Panc1 (cell line): ENCODE measurements at regions of chr5 and their contacts with region 1.

Region 1: DNA sequence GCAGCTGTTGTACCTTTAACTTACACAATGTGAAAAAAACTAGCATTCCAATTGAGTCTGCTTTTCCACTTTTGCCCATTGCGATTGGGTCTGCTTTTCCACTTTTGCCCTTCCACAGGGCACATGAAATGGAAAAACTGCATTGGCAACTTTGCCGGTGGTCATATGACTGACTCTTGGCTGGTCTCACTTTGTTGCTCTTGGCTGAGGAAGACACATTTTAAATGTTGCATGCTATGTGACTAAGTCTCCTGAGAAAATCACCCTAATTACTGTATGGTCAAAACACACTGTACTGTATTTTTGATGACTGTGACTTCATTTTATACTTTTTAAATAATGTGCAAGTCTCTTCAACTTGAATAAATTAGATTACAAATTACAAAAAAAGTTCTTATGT is 1.6 kb upstream of the OXCT1 start:
- DNase-seq: no peak
- ATAC-seq: no peak
- H3K4me3 ChIP-seq: no peak overlapping the region
- H3K27ac ChIP-seq: no peak overlapping the region
- H3K4me1 ChIP-seq: peaks cover 4% of the 10 kb centered on the region
- H3K27me3 ChIP-seq: peaks cover 10% of the 10 kb centered on the region
- CTCF ChIP-seq: no peak

Region 2: DNA sequence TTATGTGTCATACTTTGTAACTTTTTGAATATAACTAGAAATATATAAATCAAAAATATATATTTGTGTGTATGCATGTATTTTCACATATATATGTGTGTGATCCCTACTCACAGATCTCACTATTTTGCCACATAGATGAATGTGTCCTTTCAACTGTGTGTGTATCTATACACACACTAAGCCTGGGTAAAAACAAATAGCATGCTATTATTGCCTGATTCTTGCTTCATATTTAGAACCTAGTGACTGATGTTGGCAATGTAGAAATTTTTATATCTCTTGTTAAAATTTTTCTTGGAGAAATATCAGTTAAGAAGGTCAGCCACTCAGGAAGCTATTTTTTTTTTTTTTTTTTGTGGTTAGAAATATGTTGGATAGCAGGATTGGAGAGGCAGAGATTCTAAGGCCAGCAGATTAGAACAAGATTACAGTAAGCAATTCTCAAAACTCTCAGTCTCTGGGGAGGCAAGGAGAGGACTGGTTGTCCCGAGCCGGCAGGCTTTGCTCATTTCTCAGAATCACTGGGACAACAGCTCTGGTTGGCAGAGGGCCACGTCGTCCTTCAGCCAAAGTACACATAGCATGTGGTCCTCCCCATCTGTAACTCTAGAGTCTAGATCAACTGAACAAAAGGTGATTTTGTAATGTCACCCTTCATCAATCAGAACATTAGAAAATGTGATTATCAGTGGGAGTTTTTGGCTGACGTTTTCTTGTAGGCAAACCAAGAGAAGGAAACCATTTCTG is 678.2 kb before region 1 on chr5:
- CTCF ChIA-PET with region 1: no interaction called
- POLR2A ChIA-PET with region 1: no interaction called
- in situ Hi-C with region 1: no loop called
- intact Hi-C with region 1: no loop called
- DNase-seq: no peak
- ATAC-seq: no peak
- H3K4me3 ChIP-seq: no peak overlapping the region
- H3K27ac ChIP-seq: no peak overlapping the region
- H3K4me1 ChIP-seq: no peaks in the 10 kb centered on the region
- H3K27me3 ChIP-seq: no peaks in the 10 kb centered on the region
- CTCF ChIP-seq: no peak

Region 3: GRCh38 chr5:42745426-42745825 is 873.6 kb after region 1 on chr5:
- CTCF ChIA-PET with region 1: no interaction called
- POLR2A ChIA-PET with region 1: interaction called, 10 read pairs
- in situ Hi-C with region 1: no loop called
- intact Hi-C with region 1: no loop called
- DNase-seq: no peak
- ATAC-seq: no peak
- H3K4me3 ChIP-seq: no peak overlapping the region
- H3K27ac ChIP-seq: no peak overlapping the region
- H3K4me1 ChIP-seq: no peaks in the 10 kb centered on the region
- H3K27me3 ChIP-seq: no peaks in the 10 kb centered on the region
- CTCF ChIP-seq: peak; percentile 64